Lower leg skin (tissue), 4 donors: ENCODE measurements at regions of chr12 and their contacts with region 1.

Region 1: DNA sequence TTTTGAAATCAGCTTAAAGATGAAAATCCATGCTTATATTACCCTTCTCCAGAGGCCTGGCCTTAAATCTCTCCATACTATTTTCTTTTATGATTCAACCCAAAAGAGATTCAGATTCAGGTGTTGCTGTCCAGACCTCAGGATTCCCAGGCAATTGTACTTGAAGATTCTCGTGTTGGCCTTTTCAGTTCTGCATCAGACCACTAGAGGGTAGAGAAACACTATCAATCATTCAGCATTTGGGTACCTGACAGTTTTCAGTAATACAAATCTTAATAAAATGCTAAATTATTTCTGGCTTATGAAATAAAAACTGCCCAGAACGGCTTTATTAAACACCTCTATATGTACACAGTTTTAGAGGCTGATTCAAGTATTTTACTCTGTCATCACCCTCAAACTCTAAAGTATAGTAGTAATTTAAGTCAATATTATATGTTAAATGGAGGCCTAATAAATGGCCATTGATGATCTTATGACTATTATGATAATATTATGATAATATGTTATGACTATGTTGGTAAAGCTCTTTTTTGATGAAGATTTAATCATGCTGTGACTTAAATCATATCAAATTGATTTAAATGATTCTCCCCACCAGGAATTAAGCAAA is 301.1 kb downstream of the DUSP6 start:
- DNase-seq: peak in 1 of 2 donors; percentile 42
- H3K4me3 ChIP-seq: no peak overlapping the region
- CTCF ChIP-seq: peak in 1 of 3 donors; percentile 75
- POLR2A ChIP-seq: no peak

Region 2: DNA sequence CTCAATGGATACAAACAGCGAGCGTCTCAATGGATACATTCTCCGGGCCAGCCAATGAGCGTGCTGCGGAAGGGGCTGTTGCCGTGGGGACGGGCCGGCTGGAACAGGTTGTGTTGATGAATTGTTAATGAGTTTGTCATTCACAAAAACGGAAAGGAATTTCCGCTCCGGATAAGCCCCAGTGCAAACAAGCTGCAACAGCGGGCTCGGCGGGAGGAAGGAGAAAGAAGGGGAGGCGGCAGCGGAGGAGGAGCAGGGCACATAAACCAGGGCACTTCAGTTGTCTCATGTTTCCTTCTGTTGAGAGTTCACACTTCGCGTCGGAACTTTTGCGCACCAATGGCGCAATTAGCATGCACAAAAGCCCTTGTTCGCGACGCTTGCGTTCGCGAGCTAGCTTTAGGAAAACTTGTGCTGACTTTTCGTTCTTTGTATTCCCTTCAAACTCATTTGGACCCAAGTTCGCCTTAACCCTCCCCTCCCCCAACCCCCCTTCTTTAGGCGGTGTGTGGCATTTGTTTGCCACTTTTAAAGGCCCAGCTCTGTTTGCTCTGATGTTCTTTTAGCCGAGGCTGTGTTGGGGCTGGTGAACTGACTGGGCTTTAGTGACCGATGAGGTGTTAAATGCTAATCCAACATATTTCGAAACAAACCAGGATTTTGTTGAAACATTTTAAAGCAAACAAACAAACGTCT is 301.5 kb after region 1 on chr12 and contains the start of gene DUSP6:
- intact Hi-C with region 1: loop called (anchors 5 kb)
- DNase-seq: peak; percentile 97 to 99
- H3K4me3 ChIP-seq: peak within 1 kb of the TSS; percentile 62
- CTCF ChIP-seq: no peak
- POLR2A ChIP-seq: peak in 1 of 2 donors; percentile 54
- total RNA-seq, gene DUSP6: 29.6 to 57.5 (median 41.9) TPM

Region 3: DNA sequence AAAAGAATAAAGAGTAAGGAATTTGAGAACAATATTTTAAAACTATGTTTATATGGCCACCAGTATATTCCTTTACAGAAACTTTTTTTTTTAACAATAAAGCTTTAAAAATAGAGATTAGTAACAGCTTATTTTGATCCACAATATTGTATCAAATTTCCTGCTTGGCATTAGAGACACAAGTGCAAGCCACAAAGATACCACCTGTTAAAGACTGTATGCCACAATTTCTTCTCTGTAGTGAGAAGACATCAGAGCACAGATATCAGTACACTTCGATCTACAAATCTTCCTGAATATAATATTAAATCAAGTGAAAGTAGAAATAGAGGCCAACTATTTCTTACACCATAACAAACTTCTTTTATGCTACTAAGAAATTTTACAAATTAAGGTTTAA is 405.4 kb after region 1 on chr12:
- intact Hi-C with region 1: loop called (anchors 5 kb)
- DNase-seq: no peak
- H3K4me3 ChIP-seq: no peak overlapping the region
- CTCF ChIP-seq: no peak
- POLR2A ChIP-seq: no peak